CD4-positive, alpha-beta T cell (primary cell): ENCODE measurements at regions of chr4 and their contacts with region 1.

Region 1: DNA sequence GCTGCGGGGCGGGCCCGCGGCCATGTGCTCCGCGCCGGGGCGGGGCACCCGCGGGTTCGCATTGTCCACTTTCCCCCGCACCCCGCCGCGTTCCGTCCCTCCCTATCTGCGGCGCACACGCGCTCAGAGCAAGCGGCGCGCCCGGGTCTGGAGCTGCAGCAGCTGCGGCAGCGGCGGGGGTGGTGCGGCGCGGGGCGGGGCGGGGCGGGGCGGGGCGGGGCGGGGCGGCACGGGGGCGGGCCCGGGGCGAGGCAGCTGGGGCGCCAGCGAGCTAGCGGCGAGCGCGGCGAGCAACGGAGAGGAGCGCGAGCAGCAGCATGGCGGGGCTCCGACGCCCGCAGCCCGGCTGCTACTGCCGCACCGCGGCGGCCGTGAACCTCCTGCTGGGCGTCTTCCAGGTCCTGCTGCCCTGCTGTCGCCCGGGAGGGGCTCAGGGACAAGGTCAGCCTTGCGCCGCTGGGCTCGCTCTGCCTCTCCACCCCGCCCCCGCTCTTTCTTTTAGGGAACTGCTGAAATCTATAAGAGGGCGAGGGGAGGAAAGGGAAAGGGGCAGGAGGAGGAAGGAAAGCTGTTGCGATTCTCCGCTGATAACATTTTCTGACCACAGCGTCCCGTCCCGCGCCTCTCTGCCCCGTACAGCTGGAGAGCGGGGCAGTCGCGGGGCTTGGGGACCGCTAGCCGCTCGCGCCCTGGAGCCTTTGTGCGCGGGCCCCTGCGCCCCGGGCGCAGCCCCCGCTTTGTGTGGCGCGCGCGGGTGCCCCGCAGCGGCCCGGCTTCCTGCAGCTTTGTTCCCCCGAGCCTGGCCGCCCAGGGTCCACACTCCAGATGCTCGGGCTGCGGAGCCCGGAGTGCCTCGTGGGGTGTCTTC is at the start of gene TMEM131L:
- DNase-seq: peak in 13 of 14 experiments; percentile 52 to 93 (median 69)
- ATAC-seq: peak; percentile 72
- H3K4me3 ChIP-seq: peak within 1 kb of the TSS; percentile 98
- H3K4me3 Mint-ChIP-seq: peak within 1 kb of the TSS; percentile 99
- H3K27ac ChIP-seq: peak within 1 kb of the TSS; percentile 87 to 89
- H3K27ac Mint-ChIP-seq: peak within 1 kb of the TSS; percentile 95
- H3K4me1 ChIP-seq: peaks cover 26% of the 10 kb centered on the region
- H3K4me1 Mint-ChIP-seq: peaks cover 52% of the 10 kb centered on the region
- H3K27me3 ChIP-seq: no peaks in the 10 kb centered on the region
- H3K27me3 Mint-ChIP-seq: no peaks in the 10 kb centered on the region
- CTCF ChIP-seq: peak; percentile 19
- total RNA-seq, gene TMEM131L: 101 to 106 TPM

Region 2: GRCh38 chr4:153344131-153345010 is 121.9 kb before region 1 on chr4 and contains the start of gene MND1:
- CTCF ChIA-PET with region 1: interaction called, 4 read pairs
- POLR2A ChIA-PET with region 1: interaction called, 30 read pairs
- intact Hi-C with region 1: loop called (anchors 1 kb)
- DNase-seq: peak; percentile 85 to 94 (median 90)
- ATAC-seq: peak; percentile 92
- H3K4me3 ChIP-seq: peak within 1 kb of the TSS; percentile 80
- H3K4me3 Mint-ChIP-seq: peak within 1 kb of the TSS; percentile 93
- H3K27ac ChIP-seq: no peak within 1 kb of the TSS
- H3K27ac Mint-ChIP-seq: peak within 1 kb of the TSS; percentile 57
- H3K4me1 ChIP-seq: peaks cover 4% of the 10 kb centered on the region
- H3K4me1 Mint-ChIP-seq: peaks cover 13% of the 10 kb centered on the region
- H3K27me3 ChIP-seq: no peaks in the 10 kb centered on the region
- H3K27me3 Mint-ChIP-seq: peaks cover 7% of the 10 kb centered on the region
- CTCF ChIP-seq: peak; percentile 98
- total RNA-seq, gene MND1: 0.42 TPM in 1 of 2 experiments, not detected in the other

Region 3: GRCh38 chr4:153374442-153374841 is 91.9 kb before region 1 on chr4:
- CTCF ChIA-PET with region 1: no interaction called
- POLR2A ChIA-PET with region 1: no interaction called
- intact Hi-C with region 1: no loop called
- DNase-seq: no peak
- ATAC-seq: no peak
- H3K4me3 ChIP-seq: no peak overlapping the region
- H3K4me3 Mint-ChIP-seq: no peak overlapping the region
- H3K27ac ChIP-seq: no peak overlapping the region
- H3K27ac Mint-ChIP-seq: no peak overlapping the region
- H3K4me1 ChIP-seq: no peaks in the 10 kb centered on the region
- H3K4me1 Mint-ChIP-seq: no peaks in the 10 kb centered on the region
- H3K27me3 ChIP-seq: no peaks in the 10 kb centered on the region
- H3K27me3 Mint-ChIP-seq: no peaks in the 10 kb centered on the region
- CTCF ChIP-seq: no peak

Region 4: GRCh38 chr4:153432968-153433753 is 33.2 kb before region 1 on chr4:
- CTCF ChIA-PET with region 1: interaction called, 33 read pairs
- POLR2A ChIA-PET with region 1: interaction called, 90 read pairs
- intact Hi-C with region 1: loop called in 1 of 2 experiments (anchors 2 kb)
- DNase-seq: peak; percentile 40 to 90 (median 52)
- ATAC-seq: peak; percentile 69
- H3K4me3 ChIP-seq: peak overlapping the region; percentile 54
- H3K4me3 Mint-ChIP-seq: peak overlapping the region; percentile 83
- H3K27ac ChIP-seq: peak overlapping the region; percentile 25 to 59
- H3K27ac Mint-ChIP-seq: peak overlapping the region; percentile 91
- H3K4me1 ChIP-seq: peaks cover 42% of the 10 kb centered on the region
- H3K4me1 Mint-ChIP-seq: peaks cover 73% of the 10 kb centered on the region
- H3K27me3 ChIP-seq: no peaks in the 10 kb centered on the region
- H3K27me3 Mint-ChIP-seq: no peaks in the 10 kb centered on the region
- CTCF ChIP-seq: peak; percentile 79

Region 5: GRCh38 chr4:153448003-153448731 is 18.1 kb before region 1 on chr4:
- CTCF ChIA-PET with region 1: interaction called, 16 read pairs
- POLR2A ChIA-PET with region 1: interaction called, 34 read pairs
- intact Hi-C with region 1: no loop called
- DNase-seq: no peak
- ATAC-seq: no peak
- H3K4me3 ChIP-seq: no peak overlapping the region
- H3K4me3 Mint-ChIP-seq: no peak overlapping the region
- H3K27ac ChIP-seq: no peak overlapping the region
- H3K27ac Mint-ChIP-seq: peak overlapping the region; percentile 3
- H3K4me1 ChIP-seq: peaks cover 13% of the 10 kb centered on the region
- H3K4me1 Mint-ChIP-seq: peaks cover 35% of the 10 kb centered on the region
- H3K27me3 ChIP-seq: no peaks in the 10 kb centered on the region
- H3K27me3 Mint-ChIP-seq: no peaks in the 10 kb centered on the region
- CTCF ChIP-seq: no peak

Region 6: GRCh38 chr4:153497988-153498967 is 32.0 kb after region 1 on chr4:
- CTCF ChIA-PET with region 1: interaction called, 11 read pairs
- POLR2A ChIA-PET with region 1: interaction called, 434 read pairs
- intact Hi-C with region 1: loop called in 1 of 2 experiments (anchors 2 kb)
- DNase-seq: peak in 3 of 14 experiments; percentile 43 to 52 (median 45)
- ATAC-seq: peak; percentile 32
- H3K4me3 ChIP-seq: peak overlapping the region; percentile 32
- H3K4me3 Mint-ChIP-seq: peak overlapping the region; percentile 84
- H3K27ac ChIP-seq: peak overlapping the region; percentile 82 to 90
- H3K27ac Mint-ChIP-seq: peak overlapping the region; percentile 92
- H3K4me1 ChIP-seq: peaks cover 85% of the 10 kb centered on the region
- H3K4me1 Mint-ChIP-seq: peaks cover 97% of the 10 kb centered on the region
- H3K27me3 ChIP-seq: no peaks in the 10 kb centered on the region
- H3K27me3 Mint-ChIP-seq: no peaks in the 10 kb centered on the region
- CTCF ChIP-seq: no peak

Region 7: DNA sequence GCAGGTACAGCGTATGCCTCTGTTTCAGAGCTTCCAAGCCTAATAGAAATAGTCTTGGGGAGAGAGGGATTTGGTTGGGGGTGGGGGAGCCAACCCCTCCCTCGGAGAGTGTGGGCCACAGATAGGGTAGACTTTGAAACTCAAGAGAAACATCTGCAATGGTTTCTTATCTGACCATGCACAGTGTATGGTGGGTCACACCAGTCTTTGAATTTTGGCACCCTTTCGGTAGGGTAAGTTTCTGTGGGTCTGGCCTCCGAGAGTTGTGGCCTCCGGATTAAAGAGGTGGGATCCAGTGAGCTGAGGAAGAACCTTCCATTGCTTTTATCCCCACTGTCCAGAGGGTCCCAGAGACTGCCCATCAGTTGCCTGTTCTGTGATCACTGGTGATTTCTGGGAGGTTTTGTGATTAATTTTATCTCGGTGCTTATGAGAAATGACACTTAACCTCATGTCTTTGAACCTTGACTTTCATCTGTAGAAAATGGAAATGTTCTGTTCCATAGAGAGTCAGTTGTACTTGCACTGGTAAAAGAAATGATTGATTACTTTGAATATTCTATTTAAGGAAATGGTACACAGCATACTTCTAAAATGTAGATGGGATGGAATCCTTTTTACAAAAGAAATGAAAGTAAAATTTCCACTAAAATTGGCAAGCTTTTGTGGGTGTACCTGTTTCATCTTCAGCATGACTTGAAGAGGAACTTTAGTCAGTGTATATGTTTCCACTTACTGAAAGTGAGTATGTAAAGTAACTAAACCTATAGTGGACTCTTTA is 62.6 kb after region 1 on chr4:
- CTCF ChIA-PET with region 1: interaction called, 9 read pairs
- POLR2A ChIA-PET with region 1: interaction called, 41 read pairs
- intact Hi-C with region 1: loop called in 1 of 2 experiments (anchors 5 kb)
- DNase-seq: peak in 1 of 14 experiments; percentile 30
- ATAC-seq: peak; percentile 21
- H3K4me3 ChIP-seq: peak overlapping the region; percentile 37
- H3K4me3 Mint-ChIP-seq: peak overlapping the region; percentile 75
- H3K27ac ChIP-seq: peak overlapping the region; percentile 39 to 69
- H3K27ac Mint-ChIP-seq: peak overlapping the region; percentile 91
- H3K4me1 ChIP-seq: peaks cover 83% of the 10 kb centered on the region
- H3K4me1 Mint-ChIP-seq: peaks cover 92% of the 10 kb centered on the region
- H3K27me3 ChIP-seq: no peaks in the 10 kb centered on the region
- H3K27me3 Mint-ChIP-seq: no peaks in the 10 kb centered on the region
- CTCF ChIP-seq: no peak

Region 8: GRCh38 chr4:153573881-153574802 is 107.8 kb after region 1 on chr4:
- CTCF ChIA-PET with region 1: interaction called, 24 read pairs
- POLR2A ChIA-PET with region 1: interaction called, 67 read pairs
- intact Hi-C with region 1: loop called in 1 of 2 experiments (anchors 10 kb)
- DNase-seq: peak; percentile 47 to 83 (median 65)
- ATAC-seq: peak; percentile 97
- H3K4me3 ChIP-seq: no peak overlapping the region
- H3K4me3 Mint-ChIP-seq: peak overlapping the region; percentile 25
- H3K27ac ChIP-seq: peak overlapping the region; percentile 1 to 32
- H3K27ac Mint-ChIP-seq: peak overlapping the region; percentile 57
- H3K4me1 ChIP-seq: peaks cover 37% of the 10 kb centered on the region
- H3K4me1 Mint-ChIP-seq: peaks cover 85% of the 10 kb centered on the region
- H3K27me3 ChIP-seq: no peaks in the 10 kb centered on the region
- H3K27me3 Mint-ChIP-seq: no peaks in the 10 kb centered on the region
- CTCF ChIP-seq: peak; percentile 78

Region 9: GRCh38 chr4:155271557-155271956 is 1805.2 kb after region 1 on chr4:
- CTCF ChIA-PET with region 1: no interaction called
- POLR2A ChIA-PET with region 1: no interaction called
- intact Hi-C with region 1: no loop called
- DNase-seq: peak in 1 of 14 experiments; percentile 1
- ATAC-seq: no peak
- H3K4me3 ChIP-seq: no peak overlapping the region
- H3K4me3 Mint-ChIP-seq: no peak overlapping the region
- H3K27ac ChIP-seq: no peak overlapping the region
- H3K27ac Mint-ChIP-seq: no peak overlapping the region
- H3K4me1 ChIP-seq: no peaks in the 10 kb centered on the region
- H3K4me1 Mint-ChIP-seq: no peaks in the 10 kb centered on the region
- H3K27me3 ChIP-seq: no peaks in the 10 kb centered on the region
- H3K27me3 Mint-ChIP-seq: peaks cover 14% of the 10 kb centered on the region
- CTCF ChIP-seq: no peak